WTC11 (cell line): ENCODE measurements at regions of chr22 and their contacts with region 1.

Region 1: DNA sequence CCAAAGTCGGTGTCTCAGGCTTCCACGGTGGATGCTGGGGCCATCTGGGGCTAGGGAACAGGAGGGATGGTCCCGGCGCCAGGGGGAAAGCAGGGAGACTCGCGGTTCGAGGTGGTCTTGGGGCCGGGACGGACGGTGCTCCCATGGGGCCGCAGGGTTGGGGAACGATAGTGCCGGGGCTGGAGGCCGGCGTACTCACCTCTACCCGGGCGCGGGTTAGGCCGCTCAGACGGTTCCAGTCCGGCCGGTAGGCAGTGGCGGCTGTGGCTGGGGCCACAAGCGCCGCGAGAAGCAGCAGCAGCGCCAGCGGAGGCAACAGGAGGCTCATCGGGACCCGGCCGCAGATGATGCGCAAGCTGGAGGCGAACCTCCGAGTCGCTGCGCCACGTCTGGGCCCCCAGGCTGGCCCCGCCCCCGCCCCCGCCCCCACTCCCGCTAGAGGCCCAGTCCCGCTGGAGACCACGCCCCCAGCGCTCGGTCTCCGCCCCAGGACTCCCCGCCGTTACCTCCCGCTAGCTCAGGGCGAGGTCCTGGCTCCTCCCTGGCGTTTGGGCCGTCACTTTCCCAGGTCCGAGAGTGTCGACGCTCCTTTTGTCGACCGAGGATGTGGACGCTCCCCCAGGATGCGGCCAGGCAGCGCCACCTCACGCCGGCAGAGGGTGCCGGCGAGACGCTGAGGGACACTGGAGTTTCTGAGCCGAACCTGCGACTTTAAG is at the start of gene SELENOM:
- DNase-seq: peak; percentile 95
- ATAC-seq: peak; percentile 85
- H3K4me3 Mint-ChIP-seq: peak within 1 kb of the TSS; percentile 74
- H3K27ac Mint-ChIP-seq: peak within 1 kb of the TSS; percentile 19; the same call in 1 of the 2 replicates
- H3K4me1 Mint-ChIP-seq: peaks cover 18% of the 10 kb centered on the region
- H3K27me3 Mint-ChIP-seq: peaks cover 49% of the 10 kb centered on the region
- CTCF ChIP-seq: peak; percentile 46
- total RNA-seq, gene SELENOM: 16.3 to 24.6 TPM (median 22.6 TPM) in 3 replicates

Region 2: GRCh38 chr22:30968924-30969539 is 138.3 kb before region 1 on chr22 and contains the start of gene TUG1:
- CTCF ChIA-PET with region 1: interaction called, 17 read pairs
- POLR2A ChIA-PET with region 1: no interaction called
- DNase-seq: peak; percentile 97
- ATAC-seq: peak; percentile 93
- H3K4me3 Mint-ChIP-seq: peak within 1 kb of the TSS; percentile 88
- H3K27ac Mint-ChIP-seq: peak within 1 kb of the TSS; percentile 98
- H3K4me1 Mint-ChIP-seq: peaks cover 61% of the 10 kb centered on the region
- H3K27me3 Mint-ChIP-seq: no peaks in the 10 kb centered on the region
- CTCF ChIP-seq: no peak
- total RNA-seq, gene TUG1: 94.8 to 105 TPM (median 96.2 TPM) in 3 replicates

Region 3: DNA sequence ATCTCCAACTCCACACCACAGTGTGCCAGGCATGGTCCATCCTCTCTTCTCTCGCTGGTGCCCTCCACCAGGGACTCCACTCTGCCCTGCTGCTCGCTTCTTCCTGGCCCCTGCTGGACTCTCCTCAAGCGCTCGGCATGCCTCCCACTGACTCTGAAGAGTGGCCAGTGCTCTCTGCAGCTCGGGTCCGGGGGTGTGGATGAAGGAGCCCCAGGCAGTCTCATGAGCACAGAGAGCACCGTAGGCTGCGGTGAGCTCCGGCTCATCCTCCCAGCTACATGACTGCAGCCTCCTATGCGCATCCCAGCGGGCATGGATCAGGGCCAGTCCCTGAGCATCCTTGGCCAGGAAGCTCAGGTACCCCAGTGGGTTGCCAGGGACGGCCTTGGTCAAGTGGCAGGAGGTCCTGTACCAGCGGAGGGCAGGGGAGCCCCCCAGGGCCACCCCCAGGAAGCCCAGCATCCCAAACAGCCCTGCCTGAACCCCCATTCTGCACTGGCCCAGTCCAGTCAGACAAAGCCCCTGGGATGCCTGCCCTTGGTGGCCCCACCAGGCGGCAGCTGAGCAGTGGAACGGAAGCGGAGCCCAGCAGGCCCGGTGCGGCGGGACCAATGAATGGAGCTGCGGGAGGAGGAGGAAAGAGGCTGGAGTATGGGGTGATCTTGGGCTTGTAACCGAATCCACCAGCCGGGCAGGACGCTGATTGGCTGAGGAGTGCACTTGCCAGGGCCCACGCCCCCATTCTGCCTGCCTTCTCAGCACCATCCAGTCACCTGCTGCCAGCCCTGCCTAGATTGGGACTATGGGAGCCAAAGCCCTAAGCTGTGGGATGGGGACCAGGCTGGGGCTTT is 32.8 kb after region 1 on chr22 and contains the start of gene PLA2G3:
- CTCF ChIA-PET with region 1: interaction called, 73 read pairs
- POLR2A ChIA-PET with region 1: interaction called, 9 read pairs
- DNase-seq: peak; percentile 94
- ATAC-seq: peak; percentile 98
- H3K4me3 Mint-ChIP-seq: peak within 1 kb of the TSS; percentile 86
- H3K27ac Mint-ChIP-seq: peak within 1 kb of the TSS; percentile 82
- H3K4me1 Mint-ChIP-seq: peaks cover 22% of the 10 kb centered on the region
- H3K27me3 Mint-ChIP-seq: peaks cover 9% of the 10 kb centered on the region
- CTCF ChIP-seq: no peak
- total RNA-seq, gene PLA2G3: 14.7 to 18.3 TPM (median 15.1 TPM) in 3 replicates

Region 4: GRCh38 chr22:31160328-31160978 is 53.1 kb after region 1 on chr22:
- CTCF ChIA-PET with region 1: interaction called, 12 read pairs
- POLR2A ChIA-PET with region 1: interaction called, 4 read pairs
- DNase-seq: no peak
- ATAC-seq: peak; percentile 54
- H3K4me3 Mint-ChIP-seq: peak overlapping the region; percentile 92
- H3K27ac Mint-ChIP-seq: peak overlapping the region; percentile 95
- H3K4me1 Mint-ChIP-seq: peaks cover 10% of the 10 kb centered on the region
- H3K27me3 Mint-ChIP-seq: peaks cover 43% of the 10 kb centered on the region
- CTCF ChIP-seq: no peak

Region 5: GRCh38 chr22:31248138-31248745 is 140.9 kb after region 1 on chr22:
- CTCF ChIA-PET with region 1: interaction called, 10 read pairs
- POLR2A ChIA-PET with region 1: no interaction called
- DNase-seq: peak; percentile 80
- ATAC-seq: peak; percentile 96
- H3K4me3 Mint-ChIP-seq: peak overlapping the region; percentile 64
- H3K27ac Mint-ChIP-seq: peak overlapping the region; percentile 92
- H3K4me1 Mint-ChIP-seq: peaks cover 36% of the 10 kb centered on the region
- H3K27me3 Mint-ChIP-seq: no peaks in the 10 kb centered on the region
- CTCF ChIP-seq: no peak

Region 6: DNA sequence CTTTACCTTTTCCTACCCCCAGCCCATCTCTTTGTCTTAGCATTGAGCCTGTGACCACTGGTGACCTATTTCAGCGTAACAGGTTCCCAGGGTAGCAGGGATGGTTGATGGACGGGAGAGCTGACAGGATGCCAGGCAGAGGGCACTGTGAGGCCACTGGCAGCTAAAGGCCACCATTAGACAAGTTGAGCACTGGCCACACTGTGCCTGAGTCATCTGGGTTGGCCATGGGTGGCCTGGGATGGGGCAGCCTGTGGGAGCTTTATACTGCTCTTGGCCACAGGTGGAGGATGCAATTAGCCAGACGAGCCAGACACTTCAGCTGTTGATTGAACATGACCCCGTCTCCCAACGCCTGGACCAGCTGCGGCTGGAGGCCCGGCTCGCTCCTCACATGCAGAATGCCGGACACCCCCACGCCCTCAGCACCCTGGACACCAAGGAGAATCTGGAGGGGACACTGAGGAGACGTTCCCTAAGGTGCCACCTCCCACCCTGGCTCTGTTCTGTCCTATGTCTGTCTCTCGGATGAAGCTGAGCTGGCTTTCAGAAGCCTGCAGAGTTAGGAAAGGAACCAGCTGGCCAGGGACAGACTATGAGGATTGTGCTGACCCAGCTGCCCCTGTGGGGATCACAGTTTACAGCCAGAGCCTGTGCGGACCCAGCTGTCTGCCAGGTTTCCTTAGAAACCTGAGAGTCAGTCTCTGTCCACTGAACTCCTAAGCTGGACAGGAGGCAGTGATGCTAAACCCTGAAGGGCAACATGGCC is 155.2 kb after region 1 on chr22:
- CTCF ChIA-PET with region 1: no interaction called
- POLR2A ChIA-PET with region 1: no interaction called
- DNase-seq: no peak
- ATAC-seq: no peak
- H3K4me3 Mint-ChIP-seq: no peak overlapping the region
- H3K27ac Mint-ChIP-seq: no peak overlapping the region
- H3K4me1 Mint-ChIP-seq: peaks cover 6% of the 10 kb centered on the region
- H3K27me3 Mint-ChIP-seq: no peaks in the 10 kb centered on the region
- CTCF ChIP-seq: no peak